Ovary (tissue), 10 donors: ENCODE measurements at regions of chr10 and their contacts with region 1.

Region 1: GRCh38 chr10:45466784-45467183 is 92.8 kb downstream of the ALOX5 start:
- DNase-seq: no peak
- H3K4me3 ChIP-seq: no peak overlapping the region
- H3K27ac ChIP-seq: no peak overlapping the region
- H3K4me1 ChIP-seq: peaks cover 6% of the 10 kb centered on the region
- H3K27me3 ChIP-seq: no peaks in the 10 kb centered on the region
- CTCF ChIP-seq: no peak
- EP300 ChIP-seq: no peak
- POLR2A ChIP-seq: no peak

Region 2: DNA sequence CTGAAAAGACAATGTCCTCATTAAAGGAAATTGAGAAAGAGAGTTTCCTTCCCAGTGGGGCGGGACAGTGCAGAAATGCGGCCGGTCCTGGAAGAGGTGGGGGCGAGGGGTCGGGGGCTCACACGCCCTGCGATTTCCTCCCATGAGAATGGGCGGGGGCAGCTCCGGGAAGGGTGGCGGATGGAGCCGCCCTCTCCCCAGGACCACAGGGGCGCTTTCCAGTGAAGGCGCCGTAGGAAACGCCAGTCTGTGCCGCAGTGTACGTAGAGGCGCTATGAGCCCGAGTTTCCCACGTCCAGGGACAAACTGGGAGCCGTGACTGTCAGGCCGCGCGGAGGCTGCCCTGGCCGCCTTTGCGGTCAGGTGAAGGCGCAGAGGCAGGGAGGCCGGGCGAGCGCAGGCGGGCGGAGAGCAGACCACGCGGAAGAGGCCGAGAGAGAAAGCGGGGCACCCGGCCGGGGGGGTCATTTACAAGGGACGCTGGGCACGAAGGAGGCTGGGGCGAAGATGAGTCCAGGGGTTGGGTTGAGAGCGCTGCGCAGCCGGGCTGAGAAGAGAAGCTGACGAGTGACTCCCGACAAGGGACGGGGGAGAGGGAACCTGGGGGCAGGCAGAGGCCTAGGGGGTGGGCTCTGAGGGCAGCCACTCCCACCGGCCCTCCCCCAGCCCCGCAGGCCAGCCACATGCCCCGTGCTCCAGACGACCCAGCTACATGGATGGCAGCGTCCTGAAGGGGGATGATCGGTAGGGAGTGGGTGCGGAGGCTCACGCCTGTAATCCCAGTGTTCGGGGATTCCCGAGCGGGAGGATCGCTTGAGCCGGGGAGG is 47.7 kb before region 1 on chr10:
- intact Hi-C with region 1: no loop called
- DNase-seq: peak; percentile 48 to 60 (median 52)
- H3K4me3 ChIP-seq: peak overlapping the region; percentile 39
- H3K27ac ChIP-seq: peak overlapping the region; percentile 48 to 81
- H3K4me1 ChIP-seq: peaks cover 6% of the 10 kb centered on the region
- H3K27me3 ChIP-seq: no peaks in the 10 kb centered on the region
- CTCF ChIP-seq: no peak
- EP300 ChIP-seq: no peak
- POLR2A ChIP-seq: no peak

Region 3: DNA sequence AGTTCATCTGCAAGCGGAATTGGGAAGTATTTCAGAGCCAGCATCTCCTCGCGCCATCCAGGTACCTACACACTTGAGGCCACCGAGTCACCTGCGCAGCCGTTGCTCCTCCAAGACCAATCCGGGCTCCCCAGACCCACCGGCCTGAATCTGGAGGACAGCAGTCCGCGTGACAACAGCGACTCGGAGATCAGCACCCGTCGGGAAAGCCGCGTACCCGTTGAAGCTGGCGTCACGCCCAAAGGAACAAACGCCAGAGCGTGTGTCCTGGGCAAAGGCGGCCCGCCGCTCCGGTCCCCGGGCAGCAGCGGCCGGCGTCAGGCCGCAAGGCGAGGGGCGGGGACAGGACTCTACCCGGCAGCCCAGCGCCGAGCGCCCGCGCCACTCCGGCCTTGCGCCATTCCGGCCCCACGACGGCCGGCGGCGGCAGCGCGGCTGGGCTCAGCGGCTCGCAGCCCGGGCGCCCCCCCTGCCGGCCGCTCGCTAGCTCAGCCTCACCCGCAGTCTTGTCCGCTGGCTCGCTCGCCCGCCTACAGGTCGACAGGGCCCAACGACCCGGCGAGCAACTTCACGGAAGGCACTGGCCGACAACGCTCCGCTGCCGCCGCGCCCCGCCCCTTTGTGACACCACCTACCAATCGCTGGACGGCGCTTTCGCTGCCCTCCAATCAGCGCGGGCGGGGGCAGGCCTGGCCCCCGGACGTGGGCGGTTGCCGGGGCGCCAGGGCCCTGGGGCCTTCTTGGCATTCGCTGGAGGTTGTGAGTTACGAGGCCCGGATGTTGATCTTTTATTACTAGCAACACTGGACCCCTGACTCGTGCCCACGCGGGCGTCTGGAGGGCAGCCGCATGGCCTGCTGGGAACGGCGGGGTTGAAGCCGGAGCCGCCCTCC is 205.6 kb after region 1 on chr10 and contains the start of gene ZFAND4:
- intact Hi-C with region 1: loop called in 1 of 4 experiments (anchors 2 kb)
- DNase-seq: peak; percentile 94 to 97 (median 95)
- H3K4me3 ChIP-seq: peak within 1 kb of the TSS; percentile 79
- H3K27ac ChIP-seq: peak within 1 kb of the TSS; percentile 63 to 81
- H3K4me1 ChIP-seq: no peaks in the 10 kb centered on the region
- H3K27me3 ChIP-seq: no peaks in the 10 kb centered on the region
- CTCF ChIP-seq: peak; percentile 37 to 89 (median 87)
- EP300 ChIP-seq: no peak
- POLR2A ChIP-seq: peak; percentile 63
- total RNA-seq, gene ZFAND4: 12.1 to 21.9 (median 15.2) TPM